ENCODE measurements at regions of chr6 and their contacts with region 1.

Region 1: DNA sequence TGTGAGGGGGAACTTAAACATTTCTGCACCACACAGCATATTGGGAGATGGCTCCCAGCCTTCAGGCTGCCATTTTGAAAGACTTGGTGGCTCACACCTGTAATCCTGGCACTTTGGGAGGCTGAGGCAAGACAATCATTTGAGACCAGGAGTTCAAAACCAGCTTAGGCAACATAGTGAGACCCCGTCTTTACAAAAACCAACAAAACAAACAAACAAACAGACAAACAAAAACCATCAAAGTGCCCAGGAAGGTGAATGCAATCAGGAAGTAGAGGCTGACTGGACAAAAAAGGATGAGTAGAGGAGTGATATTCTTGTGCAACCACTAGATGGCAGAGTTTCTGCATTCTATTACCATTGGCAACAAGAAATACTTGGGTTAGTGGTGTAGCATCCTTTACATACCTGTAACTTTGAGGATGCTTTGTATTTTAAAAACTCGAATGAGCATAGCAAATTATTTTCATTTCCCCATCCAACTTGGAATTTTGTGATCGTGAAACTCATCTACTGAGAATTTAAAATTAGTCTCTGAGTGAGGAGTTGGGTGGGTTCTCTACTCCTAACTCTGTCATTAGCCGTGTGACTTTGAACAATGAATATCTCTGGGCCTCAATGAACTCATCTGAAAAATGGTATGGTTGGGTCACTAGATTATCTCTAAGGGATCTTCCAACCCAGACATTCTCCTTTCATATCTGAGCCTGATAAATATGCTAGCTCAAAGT is 84.4 kb downstream of the CRYBG1 start:
- DNase-seq: peak in 2 of 4 donors; percentile 18 to 53
- ATAC-seq: peak; percentile 87
- H3K4me3 ChIP-seq: no peak overlapping the region
- H3K27ac ChIP-seq: no peak overlapping the region
- H3K4me1 ChIP-seq: peaks cover 4 to 29% of the 10 kb centered on the region in 2 donors
- H3K27me3 ChIP-seq: peaks cover 3 to 25% of the 10 kb centered on the region in 2 donors
- CTCF ChIP-seq: peak; percentile 68 to 80

Region 2: DNA sequence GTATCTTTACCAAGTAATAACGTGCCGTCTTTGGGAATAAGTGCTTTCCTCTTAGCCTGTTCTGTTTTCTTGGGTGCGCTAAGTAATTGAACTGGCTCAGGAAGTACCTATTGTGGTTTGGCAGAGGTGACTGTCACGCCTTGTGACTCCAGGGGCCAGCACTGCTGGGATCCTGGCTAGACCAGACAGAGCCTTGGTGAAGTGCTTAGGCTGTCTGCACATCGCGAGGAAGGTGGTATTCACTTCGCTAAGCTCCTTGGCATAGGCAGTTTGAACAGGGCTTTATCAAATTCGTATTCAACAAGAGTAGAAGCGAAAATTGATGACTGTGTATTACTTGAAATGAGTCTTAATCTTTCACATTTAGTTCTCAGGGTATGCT is 341.2 kb before region 1 on chr6:
- intact Hi-C with region 1: no loop called
- DNase-seq: no peak
- ATAC-seq: peak; percentile 86
- H3K4me3 ChIP-seq: peak overlapping the region in 1 of 2 donors; percentile 23
- H3K27ac ChIP-seq: peak overlapping the region; percentile 2 to 50
- H3K4me1 ChIP-seq: peaks cover 5 to 32% of the 10 kb centered on the region in 2 donors
- H3K27me3 ChIP-seq: peaks cover 17 to 44% of the 10 kb centered on the region in 2 donors
- CTCF ChIP-seq: no peak

Region 3: DNA sequence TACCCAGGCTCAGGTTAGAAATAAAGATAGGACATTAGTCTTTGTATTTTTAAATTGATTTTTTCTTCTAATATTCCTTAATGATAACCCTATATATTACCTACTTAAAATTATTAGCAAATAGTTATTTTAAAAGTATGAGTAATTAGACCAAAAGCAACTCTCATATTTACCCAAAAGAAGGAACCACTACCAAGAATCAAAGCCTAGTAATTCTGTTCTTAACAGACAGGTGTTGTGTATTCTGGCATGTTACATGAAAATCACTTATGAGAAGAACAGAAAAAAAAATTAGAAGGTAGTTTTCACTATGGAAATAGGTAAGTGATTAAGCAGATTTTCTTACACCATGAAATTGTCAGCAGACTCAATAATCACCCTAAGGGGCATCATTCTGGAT is 224.5 kb before region 1 on chr6:
- intact Hi-C with region 1: no loop called
- DNase-seq: no peak
- ATAC-seq: no peak
- H3K4me3 ChIP-seq: no peak overlapping the region
- H3K27ac ChIP-seq: no peak overlapping the region
- H3K4me1 ChIP-seq: peaks cover 0 to 5% of the 10 kb centered on the region in 2 donors
- H3K27me3 ChIP-seq: no peaks in the 10 kb centered on the region
- CTCF ChIP-seq: no peak

Region 4: DNA sequence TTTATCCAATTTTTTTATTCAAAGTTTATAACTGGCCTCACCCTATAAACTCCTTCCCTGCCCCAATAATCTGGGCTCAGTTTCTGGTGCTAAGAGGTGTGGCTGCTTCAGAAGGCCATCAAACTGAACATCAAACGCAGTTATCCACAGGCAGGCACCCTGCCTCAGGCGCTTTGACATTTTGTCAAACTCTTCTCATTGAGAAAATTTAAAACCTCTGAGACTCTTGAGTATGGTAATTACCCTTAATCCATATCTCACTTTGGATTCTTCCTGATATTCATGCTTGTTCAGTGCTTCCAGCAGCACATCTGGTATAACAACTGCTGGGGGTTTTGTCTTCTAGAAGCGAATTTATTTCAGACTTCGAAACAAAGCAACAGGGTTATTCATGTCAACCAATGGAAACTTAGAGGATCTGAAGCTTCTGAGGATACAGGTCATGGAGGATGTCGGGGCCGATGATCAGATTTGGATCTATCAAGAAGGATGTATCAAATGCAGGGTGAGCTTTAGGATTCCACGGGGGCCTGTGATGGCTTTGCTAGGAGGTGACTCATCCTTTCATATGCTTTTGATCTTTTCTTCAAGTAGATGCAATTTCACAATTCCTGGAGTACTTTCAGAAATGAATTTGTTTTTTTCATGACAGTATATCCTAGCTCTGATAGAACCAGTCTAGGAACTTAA is 116.2 kb after region 1 on chr6:
- intact Hi-C with region 1: loop called in 1 of 2 experiments (anchors 2 kb)
- DNase-seq: no peak
- ATAC-seq: peak; percentile 37
- H3K4me3 ChIP-seq: no peak overlapping the region
- H3K27ac ChIP-seq: peak overlapping the region in 1 of 2 donors; percentile 83
- H3K4me1 ChIP-seq: peaks cover 0 to 37% of the 10 kb centered on the region in 2 donors
- H3K27me3 ChIP-seq: no peaks in the 10 kb centered on the region
- CTCF ChIP-seq: no peak

Region 5: DNA sequence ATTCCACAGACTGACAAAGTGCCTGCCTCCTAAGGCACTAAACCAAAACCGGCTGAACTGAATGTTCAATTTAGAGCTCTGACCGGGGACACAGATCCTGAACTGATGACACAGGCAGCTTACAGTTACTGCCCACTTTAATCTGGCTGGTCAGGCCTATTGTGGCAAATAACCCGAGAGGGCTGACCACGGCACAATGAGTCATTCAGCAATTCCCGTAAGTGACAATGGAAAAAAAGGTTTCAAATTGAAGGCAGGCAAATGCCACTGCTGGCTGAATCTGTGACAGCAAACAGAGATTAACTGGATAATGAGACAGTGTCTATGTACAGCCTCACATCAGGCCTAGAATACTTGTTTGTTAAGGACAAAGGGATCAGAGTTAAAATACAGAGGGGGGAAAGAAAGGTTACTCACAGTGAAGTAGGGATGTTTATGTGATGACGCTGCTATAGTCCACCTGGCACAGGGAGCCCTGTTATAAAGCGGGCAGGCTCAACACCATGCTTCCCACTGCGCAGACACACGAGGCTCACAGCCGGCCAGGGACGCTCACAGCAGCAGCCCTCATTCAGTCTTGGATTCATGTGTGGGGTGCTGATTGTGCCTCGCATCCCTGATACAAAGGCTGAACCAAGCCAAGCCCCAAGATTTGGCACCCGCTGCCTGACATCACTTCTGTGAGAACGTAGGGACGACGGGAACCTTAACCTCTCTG is 130.0 kb after region 1 on chr6:
- intact Hi-C with region 1: loop called in 1 of 2 experiments (anchors 5 kb)
- DNase-seq: no peak
- ATAC-seq: peak; percentile 53
- H3K4me3 ChIP-seq: no peak overlapping the region
- H3K27ac ChIP-seq: no peak overlapping the region
- H3K4me1 ChIP-seq: peaks cover 0 to 16% of the 10 kb centered on the region in 2 donors
- H3K27me3 ChIP-seq: no peaks in the 10 kb centered on the region
- CTCF ChIP-seq: no peak

Region 6: GRCh38 chr6:106648651-106649308 is 203.8 kb after region 1 on chr6:
- intact Hi-C with region 1: no loop called
- DNase-seq: no peak
- ATAC-seq: no peak
- H3K4me3 ChIP-seq: no peak overlapping the region
- H3K27ac ChIP-seq: no peak overlapping the region
- H3K4me1 ChIP-seq: no peaks in the 10 kb centered on the region
- H3K27me3 ChIP-seq: no peaks in the 10 kb centered on the region
- CTCF ChIP-seq: no peak

Region 7: GRCh38 chr6:106979427-106979884 is 534.5 kb after region 1 on chr6:
- intact Hi-C with region 1: loop called in 1 of 2 experiments (anchors 10 kb)
- DNase-seq: peak; percentile 62 to 96 (median 86)
- ATAC-seq: peak; percentile 84
- H3K4me3 ChIP-seq: no peak overlapping the region
- H3K27ac ChIP-seq: no peak overlapping the region
- H3K4me1 ChIP-seq: peaks cover 0 to 11% of the 10 kb centered on the region in 2 donors
- H3K27me3 ChIP-seq: peaks cover 11 to 78% of the 10 kb centered on the region in 2 donors
- CTCF ChIP-seq: peak; percentile 88 to 89

Measured in left lung (tissue), 14 donors.